Tibial artery (tissue), 4 donors: ENCODE measurements at regions of chr3 and their contacts with region 1.

Region 1: DNA sequence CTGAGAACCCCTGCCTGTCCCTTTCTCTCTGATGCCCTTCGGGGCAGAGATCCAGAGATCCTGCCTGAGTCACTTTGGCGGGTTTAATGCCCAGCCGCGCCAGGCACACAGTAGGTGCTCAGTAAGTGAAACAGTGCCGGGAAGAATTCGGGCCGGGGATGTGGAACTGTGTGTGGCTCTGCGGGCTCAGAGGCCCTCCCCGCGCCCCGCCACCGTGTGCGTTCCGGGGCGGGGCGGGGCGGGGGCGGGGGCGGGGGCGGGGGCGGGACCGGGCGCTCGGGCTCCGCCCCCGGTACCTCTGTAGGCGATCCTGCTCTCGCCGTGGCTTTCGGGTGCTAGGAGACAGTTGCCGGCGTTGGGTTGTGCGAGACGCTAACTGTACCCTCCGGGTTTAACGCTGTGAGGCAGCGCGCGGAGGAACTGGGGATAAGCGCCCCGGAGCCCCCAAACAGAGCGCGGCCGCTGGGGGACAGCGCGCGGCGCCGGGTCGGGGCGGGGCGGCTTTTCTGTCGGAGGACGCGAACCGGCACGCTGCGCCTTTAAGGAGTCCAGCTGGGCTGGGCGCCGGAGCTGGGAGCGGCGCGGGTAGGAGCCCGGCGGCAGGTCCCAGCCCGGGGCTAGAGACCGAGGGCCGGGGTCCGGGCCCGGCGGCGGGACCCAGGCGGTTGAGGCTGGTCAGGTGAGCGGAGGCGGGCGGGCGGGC is at the start of gene ABHD6:
- DNase-seq: peak; percentile 71 to 85
- H3K4me3 ChIP-seq: peak within 1 kb of the TSS; percentile 72 to 83
- H3K27ac ChIP-seq: peak within 1 kb of the TSS; percentile 66 to 68
- H3K4me1 ChIP-seq: peaks cover 5 to 18% (median 11%) of the 10 kb centered on the region in 4 donors
- H3K27me3 ChIP-seq: peaks cover 0 to 4% of the 10 kb centered on the region in 2 donors
- CTCF ChIP-seq: no peak

Region 2: DNA sequence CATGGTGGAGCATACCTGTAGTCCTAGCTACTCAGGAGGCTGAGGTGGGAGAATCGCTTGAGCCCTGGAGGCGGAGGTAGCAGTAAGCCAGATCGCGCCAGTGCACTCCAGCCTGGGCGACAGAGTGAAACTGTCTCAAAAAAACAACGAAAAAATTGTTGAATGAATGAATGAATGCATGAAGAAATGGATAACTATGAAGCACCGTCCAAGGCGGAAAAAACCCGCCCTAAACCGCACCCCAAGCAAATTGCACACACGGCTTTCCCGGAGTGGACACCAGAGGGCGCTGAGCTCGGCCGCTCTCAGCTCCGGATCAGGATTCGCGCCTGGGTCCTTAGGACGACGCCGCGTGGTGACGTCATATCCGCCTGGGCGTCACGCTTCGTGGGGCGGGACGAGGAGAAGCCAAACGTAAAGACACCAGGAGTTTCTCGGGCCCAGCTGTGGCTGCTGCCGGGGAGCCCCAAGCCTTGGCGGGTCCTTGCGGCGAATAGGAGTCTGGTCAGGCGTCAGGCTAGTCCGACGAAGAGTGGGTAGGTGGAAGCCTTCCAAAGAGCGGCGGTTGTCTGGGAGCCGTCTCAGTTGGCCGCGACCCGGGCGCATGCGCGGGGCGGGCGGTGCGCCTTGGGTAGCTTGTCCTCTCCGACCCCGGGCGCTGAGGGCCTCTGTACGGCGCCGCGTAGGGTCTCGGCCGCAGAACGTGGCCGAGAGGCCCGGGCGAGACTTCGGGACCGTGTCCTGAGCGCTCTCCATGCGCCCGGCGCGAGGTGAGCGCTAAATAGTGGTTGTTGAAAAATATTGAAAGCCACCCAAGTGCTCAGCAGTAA is 68.7 kb after region 1 on chr3 and contains the starts of genes HTD2 and RPP14:
- intact Hi-C with region 1: loop called (anchors 5 kb)
- DNase-seq: peak; percentile 96 to 99
- H3K4me3 ChIP-seq: peak within 1 kb of the TSS; percentile 84 to 94
- H3K27ac ChIP-seq: peak within 1 kb of the TSS; percentile 90 to 97
- H3K4me1 ChIP-seq: peaks cover 5 to 30% (median 23%) of the 10 kb centered on the region in 4 donors
- H3K27me3 ChIP-seq: peaks cover 0 to 1% of the 10 kb centered on the region in 2 donors
- CTCF ChIP-seq: peak; percentile 92 to 94